CD8-positive, alpha-beta T cell (primary cell): ENCODE measurements at regions of chr10 and their contacts with region 1.

Region 1: DNA sequence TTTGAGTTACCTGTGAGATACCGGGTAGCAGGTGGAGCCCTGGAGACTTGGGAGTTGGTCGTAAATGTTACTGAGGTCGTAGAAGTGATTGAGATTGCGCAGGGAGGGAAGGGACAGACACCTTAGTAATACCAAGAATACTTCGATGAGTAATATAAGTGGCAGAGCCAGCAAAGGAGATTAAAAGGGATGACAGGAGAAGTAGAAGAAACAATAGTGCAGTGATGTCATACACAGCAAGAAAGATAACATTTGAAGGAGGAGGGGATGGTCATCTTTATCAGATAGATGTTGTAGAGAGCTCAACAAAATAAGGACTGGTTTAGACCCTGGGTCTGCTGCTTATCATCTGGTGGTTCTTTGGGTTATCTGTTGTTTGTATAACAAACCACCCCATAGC is 5.0 kb downstream of the BCCIP start:
- DNase-seq: no peak
- ATAC-seq: no peak
- H3K4me3 ChIP-seq: no peak overlapping the region
- H3K4me3 Mint-ChIP-seq: no peak overlapping the region
- H3K27ac ChIP-seq: no peak overlapping the region
- H3K27ac Mint-ChIP-seq: peak overlapping the region; percentile 47
- H3K4me1 ChIP-seq: peaks cover 26% of the 10 kb centered on the region
- H3K4me1 Mint-ChIP-seq: peaks cover 22% of the 10 kb centered on the region
- H3K27me3 ChIP-seq: no peaks in the 10 kb centered on the region
- H3K27me3 Mint-ChIP-seq: no peaks in the 10 kb centered on the region
- CTCF ChIP-seq: no peak

Region 2: DNA sequence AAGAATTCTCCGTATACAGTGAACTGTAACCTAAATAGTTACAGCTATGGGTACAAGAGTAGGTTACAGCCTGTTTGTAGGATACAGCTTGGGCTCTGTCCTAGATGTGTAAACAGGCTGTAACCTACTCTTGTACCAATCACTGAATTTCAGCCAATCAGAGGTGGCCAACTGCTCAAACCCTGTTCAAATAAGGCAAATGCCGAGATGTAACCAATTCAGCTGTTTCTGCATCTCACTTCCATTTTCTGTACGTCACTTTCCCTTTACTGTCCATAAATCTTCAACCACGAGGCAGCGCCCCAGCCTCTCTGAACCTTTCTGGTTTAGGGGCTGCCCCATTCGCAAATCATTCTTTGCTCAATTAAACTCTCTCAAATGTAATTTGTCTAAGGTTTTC is 44.4 kb before region 1 on chr10:
- CTCF ChIA-PET with region 1: no interaction called
- POLR2A ChIA-PET with region 1: interaction called, 4 read pairs
- intact Hi-C with region 1: loop called in 1 of 2 experiments (anchors 1 kb)
- DNase-seq: no peak
- ATAC-seq: no peak
- H3K4me3 ChIP-seq: no peak overlapping the region
- H3K4me3 Mint-ChIP-seq: no peak overlapping the region
- H3K27ac ChIP-seq: no peak overlapping the region
- H3K27ac Mint-ChIP-seq: no peak overlapping the region
- H3K4me1 ChIP-seq: peaks cover 20% of the 10 kb centered on the region
- H3K4me1 Mint-ChIP-seq: peaks cover 19% of the 10 kb centered on the region
- H3K27me3 ChIP-seq: no peaks in the 10 kb centered on the region
- H3K27me3 Mint-ChIP-seq: no peaks in the 10 kb centered on the region
- CTCF ChIP-seq: no peak

Region 3: GRCh38 chr10:125844751-125845221 is 16.5 kb after region 1 on chr10:
- CTCF ChIA-PET with region 1: no interaction called
- POLR2A ChIA-PET with region 1: no interaction called
- intact Hi-C with region 1: loop called in 1 of 2 experiments (anchors 1 kb)
- DNase-seq: no peak
- ATAC-seq: no peak
- H3K4me3 ChIP-seq: no peak overlapping the region
- H3K4me3 Mint-ChIP-seq: no peak overlapping the region
- H3K27ac ChIP-seq: no peak overlapping the region
- H3K27ac Mint-ChIP-seq: no peak overlapping the region
- H3K4me1 ChIP-seq: no peaks in the 10 kb centered on the region
- H3K4me1 Mint-ChIP-seq: no peaks in the 10 kb centered on the region
- H3K27me3 ChIP-seq: no peaks in the 10 kb centered on the region
- H3K27me3 Mint-ChIP-seq: no peaks in the 10 kb centered on the region
- CTCF ChIP-seq: no peak